WTC11 (cell line): ENCODE measurements at regions of chr6 and their contacts with region 1.

Region 1: GRCh38 chr6:158509465-158509864 is 50.4 kb upstream of the TMEM181 start:
- DNase-seq: no peak
- ATAC-seq: no peak
- H3K4me3 Mint-ChIP-seq: no peak overlapping the region
- H3K27ac Mint-ChIP-seq: no peak overlapping the region
- H3K4me1 Mint-ChIP-seq: peaks cover 3% of the 10 kb centered on the region
- H3K27me3 Mint-ChIP-seq: no peaks in the 10 kb centered on the region
- CTCF ChIP-seq: no peak

Region 2: GRCh38 chr6:156924246-156924645 is 1585.2 kb before region 1 on chr6:
- CTCF ChIA-PET with region 1: no interaction called
- POLR2A ChIA-PET with region 1: interaction called, 10 read pairs
- DNase-seq: no peak
- ATAC-seq: no peak
- H3K4me3 Mint-ChIP-seq: no peak overlapping the region
- H3K27ac Mint-ChIP-seq: peak overlapping the region; percentile 52
- H3K4me1 Mint-ChIP-seq: peaks cover 64% of the 10 kb centered on the region
- H3K27me3 Mint-ChIP-seq: no peaks in the 10 kb centered on the region
- CTCF ChIP-seq: no peak